CD14-positive monocyte (primary cell): ENCODE measurements at regions of chr16 and their contacts with region 1.

Region 1: DNA sequence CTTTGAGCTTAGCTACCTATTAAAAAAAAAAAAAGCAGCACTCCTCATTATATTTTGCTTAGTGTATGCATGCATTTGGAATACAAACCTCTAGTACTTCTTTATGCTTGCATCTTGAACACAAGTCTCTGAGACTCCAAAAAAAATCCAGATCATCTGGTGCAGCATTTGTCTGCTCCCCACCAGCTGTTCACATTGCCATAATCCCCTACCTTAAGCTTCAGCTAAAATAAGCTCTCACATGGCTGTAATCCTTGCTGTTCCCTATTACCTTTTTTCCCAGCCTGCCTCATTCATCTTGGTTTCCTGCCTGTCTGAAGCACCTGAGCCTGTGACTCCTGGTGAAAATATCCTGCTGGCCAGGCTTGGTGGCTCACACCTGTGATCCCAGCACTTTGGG is 7.5 kb upstream of the NFATC2IP start:
- DNase-seq: no peak
- H3K4me3 ChIP-seq: no peak overlapping the region
- H3K4me3 Mint-ChIP-seq: no peak overlapping the region
- H3K27ac ChIP-seq: no peak overlapping the region
- H3K27ac Mint-ChIP-seq: no peak overlapping the region
- H3K4me1 ChIP-seq: peaks cover 8 to 10% of the 10 kb centered on the region in 2 donors
- H3K4me1 Mint-ChIP-seq: peaks cover 14% of the 10 kb centered on the region
- H3K27me3 ChIP-seq: no peaks in the 10 kb centered on the region
- H3K27me3 Mint-ChIP-seq: peaks cover 3 to 4% (median 4%) of the 10 kb centered on the region in 3 donors
- CTCF ChIP-seq: no peak

Region 2: GRCh38 chr16:28873536-28874201 is 69.6 kb before region 1 on chr16:
- intact Hi-C with region 1: loop called (anchors 2 to 5 kb)
- DNase-seq: peak; percentile 11 to 37 (median 21)
- H3K4me3 ChIP-seq: no peak overlapping the region
- H3K4me3 Mint-ChIP-seq: no peak overlapping the region
- H3K27ac ChIP-seq: no peak overlapping the region
- H3K27ac Mint-ChIP-seq: peak overlapping the region in 3 of 7 donors; percentile 14 to 36 (median 32)
- H3K4me1 ChIP-seq: no peaks in the 10 kb centered on the region
- H3K4me1 Mint-ChIP-seq: peaks cover 5% of the 10 kb centered on the region
- H3K27me3 ChIP-seq: no peaks in the 10 kb centered on the region
- H3K27me3 Mint-ChIP-seq: peaks cover under 1 to 5% (median 3%) of the 10 kb centered on the region in 3 donors
- CTCF ChIP-seq: peak; percentile 89